ENCODE measurements at regions of chr10 and their contacts with region 1.

Region 1: GRCh38 chr10:110871298-110872084 is at the start of gene PDCD4:
- DNase-seq: peak; percentile 100
- ATAC-seq: peak; percentile 95 to 98 (median 96)
- H3K4me3 ChIP-seq: peak within 1 kb of the TSS; percentile 83 to 99 (median 94)
- H3K27ac ChIP-seq: peak within 1 kb of the TSS; percentile 92 to 99 (median 97)
- H3K4me1 ChIP-seq: peaks cover 0 to 79% (median 24%) of the 10 kb centered on the region in 9 donors
- H3K27me3 ChIP-seq: no peaks in the 10 kb centered on the region
- CTCF ChIP-seq: no peak
- total RNA-seq, gene PDCD4: 35.2 to 57.6 (median 45.7) TPM

Region 2: GRCh38 chr10:110610308-110610774 is 261.1 kb before region 1 on chr10:
- intact Hi-C with region 1: loop called in 1 of 10 experiments (anchors 10 kb)
- DNase-seq: peak in 1 of 2 donors; percentile 66
- ATAC-seq: peak; percentile 39 to 70 (median 58)
- H3K4me3 ChIP-seq: no peak overlapping the region
- H3K27ac ChIP-seq: peak overlapping the region in 4 of 10 donors; percentile 27 to 39 (median 35)
- H3K4me1 ChIP-seq: peaks cover 0 to 26% (median 4%) of the 10 kb centered on the region in 9 donors
- H3K27me3 ChIP-seq: no peaks in the 10 kb centered on the region
- CTCF ChIP-seq: peak; percentile 64 to 87 (median 83)

Region 3: DNA sequence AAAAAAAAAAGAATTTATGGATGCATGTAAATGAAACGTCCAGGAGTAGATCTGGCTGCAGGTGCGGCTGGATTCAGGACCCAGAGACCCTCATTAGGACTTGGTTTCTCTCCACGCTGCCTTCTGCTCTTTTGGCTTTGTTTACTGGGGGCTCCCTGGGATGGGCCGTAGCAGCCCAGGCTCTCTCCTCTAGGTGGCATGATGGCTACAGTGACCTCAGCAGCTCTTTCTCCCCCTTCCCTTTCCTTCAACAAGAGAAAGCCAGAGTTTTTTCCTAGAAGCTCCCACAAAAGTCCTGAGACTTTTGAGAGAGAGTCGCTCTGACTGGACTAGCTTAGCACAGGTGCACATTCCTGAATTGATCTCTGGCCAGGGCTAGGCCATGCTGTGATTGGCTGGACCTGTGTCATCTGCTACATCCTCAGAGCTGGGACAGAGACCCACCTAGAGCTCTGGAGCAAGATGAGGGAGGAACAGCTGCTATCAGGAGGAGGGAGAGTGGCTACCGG is 67.6 kb before region 1 on chr10:
- intact Hi-C with region 1: loop called in 3 of 10 experiments (anchors 5 to 10 kb)
- DNase-seq: peak in 1 of 2 donors; percentile 35
- ATAC-seq: peak in 7 of 8 donors; percentile 60 to 80 (median 69)
- H3K4me3 ChIP-seq: no peak overlapping the region
- H3K27ac ChIP-seq: peak overlapping the region in 6 of 10 donors; percentile 9 to 52 (median 37)
- H3K4me1 ChIP-seq: peaks cover 12 to 62% (median 26%) of the 10 kb centered on the region in 9 donors
- H3K27me3 ChIP-seq: no peaks in the 10 kb centered on the region
- CTCF ChIP-seq: peak; percentile 27 to 74 (median 59)

Region 4: GRCh38 chr10:110827410-110827809 is 44.1 kb before region 1 on chr10:
- intact Hi-C with region 1: loop called in 6 of 10 experiments (anchors 5 to 10 kb)
- DNase-seq: no peak
- ATAC-seq: no peak
- H3K4me3 ChIP-seq: no peak overlapping the region
- H3K27ac ChIP-seq: peak overlapping the region in 6 of 10 donors; percentile 16 to 48 (median 37)
- H3K4me1 ChIP-seq: peaks cover 6 to 76% (median 24%) of the 10 kb centered on the region in 9 donors
- H3K27me3 ChIP-seq: no peaks in the 10 kb centered on the region
- CTCF ChIP-seq: no peak

Region 5: DNA sequence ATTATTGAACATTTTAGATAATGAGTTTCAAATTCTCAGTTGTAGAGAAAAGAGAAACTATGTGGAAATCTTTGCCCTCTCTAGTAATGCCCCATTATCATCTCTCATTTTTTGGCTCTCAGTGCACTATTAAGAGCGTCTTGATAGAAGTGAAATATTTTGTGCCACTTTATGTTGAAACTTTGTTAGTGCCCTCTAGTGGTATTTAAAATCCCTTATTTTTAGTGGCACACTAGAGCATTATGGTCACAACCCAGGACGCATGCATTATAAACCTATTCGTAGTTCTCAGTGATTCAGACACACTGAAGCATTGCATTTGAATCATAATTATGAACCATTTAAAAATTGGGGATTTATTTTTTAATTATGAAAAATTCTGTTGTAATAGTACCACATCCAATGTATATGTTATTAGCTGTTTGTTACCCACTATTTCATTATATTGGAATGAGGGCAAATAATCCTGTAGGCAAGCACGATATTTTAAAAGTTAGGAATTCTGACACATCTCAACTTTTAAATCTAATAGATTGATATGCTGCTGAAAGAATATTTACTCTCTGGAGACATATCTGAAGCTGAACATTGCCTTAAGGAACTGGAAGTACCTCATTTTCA is 22.2 kb after region 1 on chr10:
- intact Hi-C with region 1: loop called in 1 of 10 experiments (anchors 2 kb)
- DNase-seq: no peak
- ATAC-seq: peak; percentile 69 to 88 (median 82)
- H3K4me3 ChIP-seq: no peak overlapping the region
- H3K27ac ChIP-seq: no peak overlapping the region
- H3K4me1 ChIP-seq: peaks cover 0 to 18% (median 5%) of the 10 kb centered on the region in 9 donors
- H3K27me3 ChIP-seq: no peaks in the 10 kb centered on the region
- CTCF ChIP-seq: peak; percentile 31 to 76 (median 61)